Naive thymus-derived CD4-positive, alpha-beta T cell (primary cell): ENCODE measurements at regions of chr3 and their contacts with region 1.

Region 1: GRCh38 chr3:141738022-141738890 is at the start of gene RNF7:
- DNase-seq: peak; percentile 95 to 98 (median 98)
- ATAC-seq: peak; percentile 96
- H3K4me3 ChIP-seq: peak within 1 kb of the TSS; percentile 94
- H3K4me3 Mint-ChIP-seq: peak within 1 kb of the TSS; percentile 92 to 100 (median 98)
- H3K27ac ChIP-seq: peak within 1 kb of the TSS; percentile 95
- H3K27ac Mint-ChIP-seq: peak within 1 kb of the TSS; percentile 92 to 99 (median 98)
- H3K4me1 ChIP-seq: peaks cover 20 to 25% of the 10 kb centered on the region in 2 donors
- H3K4me1 Mint-ChIP-seq: peaks cover 21 to 47% (median 44%) of the 10 kb centered on the region in 7 donors
- H3K27me3 ChIP-seq: no peaks in the 10 kb centered on the region
- H3K27me3 Mint-ChIP-seq: peaks cover 0 to 5% (median 0%) of the 10 kb centered on the region in 5 donors
- total RNA-seq, gene RNF7: 45.6 to 63.2 (median 57.3) TPM

Region 2: DNA sequence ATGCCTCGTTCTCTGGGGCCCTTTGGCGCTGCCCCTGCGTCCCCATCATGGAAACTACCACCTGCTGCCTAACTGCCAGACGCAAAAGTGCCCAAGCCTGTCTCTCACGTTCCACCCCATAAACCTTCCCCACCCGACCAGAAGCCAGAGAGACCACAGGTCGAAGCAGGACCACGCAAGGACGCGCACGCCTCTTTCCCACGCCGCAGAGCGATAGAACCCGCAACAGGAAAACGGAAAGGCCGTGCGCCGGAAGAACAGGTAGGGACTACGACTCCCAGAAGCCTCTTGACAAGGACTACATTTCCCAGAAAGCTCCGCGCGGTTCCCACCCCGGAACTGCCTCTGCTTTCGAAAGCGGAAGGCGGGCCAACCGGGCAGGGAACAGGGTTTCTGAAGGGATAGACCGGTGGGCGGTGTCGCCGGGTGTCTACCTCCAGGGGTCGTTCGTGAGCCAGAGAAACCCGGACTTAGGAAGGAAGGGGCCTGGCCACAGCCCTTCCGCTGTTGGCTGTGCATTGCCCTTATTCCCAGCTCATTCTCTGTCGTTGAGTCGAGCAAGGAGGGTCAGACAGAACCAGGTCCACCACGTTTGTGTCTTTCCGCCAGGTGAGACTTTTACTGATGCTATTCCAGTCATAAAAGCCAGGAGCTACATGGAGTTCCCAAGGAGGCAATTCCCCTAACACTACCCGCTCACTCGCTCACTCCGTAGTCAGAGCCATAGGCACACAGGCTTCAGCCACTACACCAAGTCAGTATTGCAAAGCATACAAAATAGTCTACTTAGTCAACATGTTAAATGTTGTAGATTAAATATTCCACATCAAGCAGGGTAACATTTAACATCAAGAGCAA is 426.5 kb before region 1 on chr3:
- CTCF ChIA-PET with region 1: interaction called, 3 read pairs
- POLR2A ChIA-PET with region 1: no interaction called
- intact Hi-C with region 1: loop called (anchors 1 to 5 kb)
- DNase-seq: peak; percentile 88 to 98 (median 97)
- ATAC-seq: peak; percentile 97
- H3K4me3 ChIP-seq: peak overlapping the region; percentile 80
- H3K4me3 Mint-ChIP-seq: peak overlapping the region; percentile 89 to 99 (median 97)
- H3K27ac ChIP-seq: peak overlapping the region; percentile 77
- H3K27ac Mint-ChIP-seq: peak overlapping the region; percentile 91 to 99 (median 97)
- H3K4me1 ChIP-seq: peaks cover 31 to 43% of the 10 kb centered on the region in 2 donors
- H3K4me1 Mint-ChIP-seq: peaks cover 38 to 71% (median 61%) of the 10 kb centered on the region in 7 donors
- H3K27me3 ChIP-seq: no peaks in the 10 kb centered on the region
- H3K27me3 Mint-ChIP-seq: no peaks in the 10 kb centered on the region

Region 3: DNA sequence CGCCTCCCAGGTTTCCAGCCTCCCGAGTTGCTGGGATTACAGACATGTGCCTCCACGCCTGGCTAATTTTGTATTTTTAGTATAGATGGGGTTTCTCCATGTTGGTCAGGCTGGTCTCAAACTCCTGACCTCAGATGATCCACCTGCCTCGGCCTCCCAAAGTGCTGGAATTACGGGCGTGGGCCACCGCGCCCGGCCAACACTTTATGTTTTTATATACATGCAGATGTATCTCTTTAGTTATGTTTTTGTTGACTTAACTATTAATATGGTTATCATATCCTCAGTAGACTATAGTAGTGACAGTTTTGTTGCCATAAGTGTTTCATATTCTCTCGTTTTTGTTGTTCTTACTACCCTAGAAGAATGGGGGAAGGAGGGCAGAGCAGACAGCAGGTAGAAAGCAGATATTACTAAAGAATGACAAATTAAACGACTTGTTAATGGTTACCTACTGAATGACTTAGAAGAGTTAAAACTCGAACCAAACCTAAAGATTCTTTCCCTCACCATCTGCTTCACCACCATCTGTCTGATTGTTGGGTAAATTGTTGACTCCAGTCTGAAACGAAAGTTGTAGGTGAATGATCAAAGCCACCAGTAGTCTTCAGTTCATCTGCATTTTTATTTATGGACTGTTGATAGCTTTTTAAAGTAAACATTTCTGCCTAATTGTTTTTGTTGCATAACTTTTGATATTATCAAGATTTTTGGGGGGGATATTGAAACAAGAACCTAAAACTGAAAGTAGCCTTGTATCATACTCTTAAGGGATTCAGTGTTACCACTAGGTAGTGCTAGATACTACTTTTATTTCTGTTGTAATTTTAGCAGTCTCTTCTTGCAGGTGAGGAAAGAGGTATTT is 162.1 kb before region 1 on chr3:
- CTCF ChIA-PET with region 1: no interaction called
- POLR2A ChIA-PET with region 1: no interaction called
- intact Hi-C with region 1: loop called in 1 of 2 experiments (anchors 1 kb)
- DNase-seq: peak in 4 of 9 donors; percentile 14 to 44 (median 41)
- ATAC-seq: peak; percentile 82
- H3K4me3 ChIP-seq: no peak overlapping the region
- H3K4me3 Mint-ChIP-seq: peak overlapping the region in 8 of 10 donors; percentile 7 to 64 (median 48)
- H3K27ac ChIP-seq: peak overlapping the region; percentile 47
- H3K27ac Mint-ChIP-seq: peak overlapping the region; percentile 36 to 88 (median 69)
- H3K4me1 ChIP-seq: no peaks in the 10 kb centered on the region
- H3K4me1 Mint-ChIP-seq: peaks cover 8 to 17% (median 12%) of the 10 kb centered on the region in 7 donors
- H3K27me3 ChIP-seq: no peaks in the 10 kb centered on the region
- H3K27me3 Mint-ChIP-seq: no peaks in the 10 kb centered on the region

Region 4: DNA sequence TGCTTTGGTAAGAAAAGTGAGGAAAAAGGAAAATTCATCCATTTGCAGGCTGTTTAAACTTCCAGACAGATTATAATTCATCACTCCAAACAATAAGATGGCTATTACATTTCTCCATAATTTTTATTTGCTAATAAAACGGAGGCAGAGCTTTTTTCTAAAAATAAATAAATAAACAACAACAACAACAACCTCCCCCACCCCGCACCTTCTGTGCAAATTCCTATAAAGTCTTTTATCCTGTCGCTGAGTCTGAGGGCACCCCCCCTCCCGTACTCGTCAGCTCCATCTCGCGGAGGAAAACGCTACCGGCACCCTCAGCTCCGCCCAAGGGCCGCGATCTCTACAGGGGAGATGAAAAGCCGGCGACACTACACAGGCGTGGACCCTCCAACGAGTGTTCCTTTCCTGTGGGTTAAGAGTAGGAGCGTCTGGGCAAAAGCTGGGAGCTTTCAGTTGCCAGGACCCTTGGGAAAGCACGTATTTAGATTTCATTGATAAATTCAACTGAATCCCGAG is 137.2 kb after region 1 on chr3:
- CTCF ChIA-PET with region 1: interaction called, 39 read pairs
- POLR2A ChIA-PET with region 1: interaction called, 49 read pairs
- intact Hi-C with region 1: loop called (anchors 1 kb)
- DNase-seq: peak; percentile 58 to 81 (median 77)
- ATAC-seq: peak; percentile 76
- H3K4me3 ChIP-seq: peak overlapping the region; percentile 82
- H3K4me3 Mint-ChIP-seq: peak overlapping the region; percentile 83 to 95 (median 91)
- H3K27ac ChIP-seq: peak overlapping the region; percentile 98
- H3K27ac Mint-ChIP-seq: peak overlapping the region; percentile 76 to 96 (median 89)
- H3K4me1 ChIP-seq: peaks cover 0 to 28% of the 10 kb centered on the region in 2 donors
- H3K4me1 Mint-ChIP-seq: peaks cover 15 to 38% (median 32%) of the 10 kb centered on the region in 7 donors
- H3K27me3 ChIP-seq: no peaks in the 10 kb centered on the region
- H3K27me3 Mint-ChIP-seq: no peaks in the 10 kb centered on the region

Region 5: GRCh38 chr3:141979050-141979671 is 240.9 kb after region 1 on chr3:
- CTCF ChIA-PET with region 1: no interaction called
- POLR2A ChIA-PET with region 1: no interaction called
- intact Hi-C with region 1: no loop called
- DNase-seq: no peak
- ATAC-seq: no peak
- H3K4me3 ChIP-seq: no peak overlapping the region
- H3K4me3 Mint-ChIP-seq: no peak overlapping the region
- H3K27ac ChIP-seq: no peak overlapping the region
- H3K27ac Mint-ChIP-seq: no peak overlapping the region
- H3K4me1 ChIP-seq: no peaks in the 10 kb centered on the region
- H3K4me1 Mint-ChIP-seq: peaks cover 0 to 5% (median 0%) of the 10 kb centered on the region in 7 donors
- H3K27me3 ChIP-seq: no peaks in the 10 kb centered on the region
- H3K27me3 Mint-ChIP-seq: no peaks in the 10 kb centered on the region

Region 6: GRCh38 chr3:142148792-142149672 is 410.8 kb after region 1 on chr3 and contains the start of gene TFDP2:
- CTCF ChIA-PET with region 1: no interaction called
- POLR2A ChIA-PET with region 1: no interaction called
- intact Hi-C with region 1: loop called (anchors 1 kb)
- DNase-seq: peak; percentile 77 to 88 (median 86)
- ATAC-seq: peak; percentile 99
- H3K4me3 ChIP-seq: peak within 1 kb of the TSS; percentile 81
- H3K4me3 Mint-ChIP-seq: peak within 1 kb of the TSS; percentile 85 to 96 (median 92)
- H3K27ac ChIP-seq: peak within 1 kb of the TSS; percentile 78
- H3K27ac Mint-ChIP-seq: peak within 1 kb of the TSS; percentile 57 to 95 (median 87)
- H3K4me1 ChIP-seq: peaks cover 0 to 13% of the 10 kb centered on the region in 2 donors
- H3K4me1 Mint-ChIP-seq: peaks cover 24 to 41% (median 32%) of the 10 kb centered on the region in 7 donors
- H3K27me3 ChIP-seq: no peaks in the 10 kb centered on the region
- H3K27me3 Mint-ChIP-seq: peaks cover 0 to 16% (median 0%) of the 10 kb centered on the region in 5 donors
- total RNA-seq, gene TFDP2: 23.7 to 44.7 (median 41.0) TPM

Region 7: GRCh38 chr3:142315083-142315482 is 576.8 kb after region 1 on chr3:
- CTCF ChIA-PET with region 1: no interaction called
- POLR2A ChIA-PET with region 1: no interaction called
- intact Hi-C with region 1: no loop called
- DNase-seq: no peak
- ATAC-seq: no peak
- H3K4me3 ChIP-seq: no peak overlapping the region
- H3K4me3 Mint-ChIP-seq: no peak overlapping the region
- H3K27ac ChIP-seq: no peak overlapping the region
- H3K27ac Mint-ChIP-seq: peak overlapping the region in 2 of 9 donors; percentile 10 to 21
- H3K4me1 ChIP-seq: no peaks in the 10 kb centered on the region
- H3K4me1 Mint-ChIP-seq: no peaks in the 10 kb centered on the region
- H3K27me3 ChIP-seq: no peaks in the 10 kb centered on the region
- H3K27me3 Mint-ChIP-seq: no peaks in the 10 kb centered on the region

Region 8: DNA sequence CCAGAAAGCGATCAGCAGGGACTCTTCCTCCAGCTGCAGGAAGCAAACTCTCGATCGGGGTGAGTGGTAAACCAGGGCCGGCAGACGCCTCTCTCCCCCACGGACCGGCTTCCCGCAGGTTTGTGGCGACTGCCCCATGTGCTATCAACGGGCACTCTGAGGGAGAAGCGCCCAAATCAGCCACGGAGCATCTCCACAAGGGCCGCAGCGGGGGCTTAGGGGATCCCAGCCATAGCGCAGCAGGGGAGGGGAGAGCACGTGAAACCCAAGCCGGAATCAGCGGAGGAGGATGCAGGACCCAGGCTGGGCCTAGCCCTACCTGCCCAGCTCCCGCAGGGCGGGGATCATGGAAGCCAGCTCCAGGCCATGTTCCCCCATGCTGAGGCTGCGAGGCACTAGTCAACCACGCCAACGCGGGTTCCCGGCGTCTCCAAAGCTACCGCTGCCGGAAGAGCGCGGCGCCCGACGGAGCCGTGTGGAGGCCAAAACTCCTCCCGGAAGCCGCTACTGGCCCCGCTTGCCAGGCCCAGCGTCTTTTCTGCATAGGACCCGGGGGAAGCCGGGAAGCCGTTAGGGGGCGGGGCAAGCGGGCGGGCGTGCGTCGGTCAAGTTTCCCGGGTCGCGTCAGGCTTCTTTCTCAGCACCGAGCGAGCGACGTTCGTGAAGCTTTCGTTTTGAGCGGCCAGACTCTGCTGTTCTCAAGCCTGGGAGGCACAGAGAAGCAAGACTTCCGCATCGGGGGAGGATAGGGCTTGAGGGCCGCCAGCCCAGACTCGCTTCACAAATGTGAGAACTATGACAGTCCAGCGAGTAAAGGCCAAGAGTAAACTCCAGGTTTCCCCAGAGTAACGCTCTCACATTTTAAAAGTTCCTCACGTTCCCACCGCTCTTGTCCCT is 840.3 kb after region 1 on chr3 and contains the start of gene ATR:
- CTCF ChIA-PET with region 1: no interaction called
- POLR2A ChIA-PET with region 1: interaction called, 3 read pairs
- intact Hi-C with region 1: loop called in 1 of 2 experiments (anchors 10 kb)
- DNase-seq: peak; percentile 89 to 96 (median 95)
- ATAC-seq: peak; percentile 96
- H3K4me3 ChIP-seq: peak within 1 kb of the TSS; percentile 97
- H3K4me3 Mint-ChIP-seq: peak within 1 kb of the TSS; percentile 93 to 99 (median 97)
- H3K27ac ChIP-seq: peak within 1 kb of the TSS; percentile 94
- H3K27ac Mint-ChIP-seq: peak within 1 kb of the TSS; percentile 96 to 99 (median 98)
- H3K4me1 ChIP-seq: peaks cover 25 to 26% of the 10 kb centered on the region in 2 donors
- H3K4me1 Mint-ChIP-seq: peaks cover 45 to 60% (median 54%) of the 10 kb centered on the region in 7 donors
- H3K27me3 ChIP-seq: no peaks in the 10 kb centered on the region
- H3K27me3 Mint-ChIP-seq: peaks cover 0 to 20% (median 0%) of the 10 kb centered on the region in 5 donors
- total RNA-seq, gene ATR: 31.3 to 48.3 (median 36.2) TPM